Activated naive CD4-positive, alpha-beta T cell treated with anti-CD3 and anti-CD28 coated beads for 36 hours (primary cell): ENCODE measurements at regions of chr14 and their contacts with region 1.

Region 1: GRCh38 chr14:95227279-95227860 is 70.0 kb upstream of the DICER1 start:
- DNase-seq: no peak
- H3K4me3 Mint-ChIP-seq: no peak overlapping the region
- H3K27ac Mint-ChIP-seq: no peak overlapping the region
- H3K4me1 Mint-ChIP-seq: no peaks in the 10 kb centered on the region
- H3K27me3 Mint-ChIP-seq: peaks cover 4% of the 10 kb centered on the region

Region 2: DNA sequence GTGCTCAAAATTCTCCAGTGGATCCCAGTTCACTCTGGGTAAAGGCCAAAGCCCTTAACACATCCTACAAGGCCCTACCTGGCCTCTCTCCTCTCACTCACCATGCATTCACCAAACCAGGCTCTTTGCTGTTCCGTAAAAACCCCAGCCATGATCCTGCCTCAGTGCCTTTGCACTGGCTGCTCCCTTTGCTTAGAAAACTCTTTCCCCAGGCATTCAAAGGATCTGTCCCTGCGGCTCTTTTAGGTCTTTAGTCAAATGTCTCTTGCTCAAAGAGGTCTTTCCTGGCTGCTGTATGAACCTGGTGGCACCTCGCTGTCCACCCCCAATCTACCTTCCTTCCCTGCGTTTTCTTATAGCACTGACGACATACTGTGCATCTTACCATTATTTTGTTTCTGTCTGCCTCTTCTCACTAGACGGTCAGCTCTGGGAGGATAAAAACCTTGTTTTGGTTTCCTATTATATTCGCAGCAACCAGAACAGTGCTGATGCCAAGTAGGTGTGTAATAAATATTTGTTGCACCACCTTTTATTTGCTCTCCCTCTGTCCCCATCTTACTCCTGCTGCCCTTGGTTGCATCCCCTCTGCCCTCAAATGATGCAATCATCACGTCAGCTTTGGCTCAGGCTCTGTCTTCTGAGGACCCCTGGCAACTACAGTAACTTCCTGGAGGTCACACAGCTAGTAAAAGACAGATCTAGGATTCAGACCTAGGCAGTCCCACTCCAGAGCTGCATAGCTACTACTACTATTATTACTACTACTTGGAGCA is 46.2 kb before region 1 on chr14:
- CTCF ChIA-PET with region 1: interaction called, 10 read pairs
- intact Hi-C with region 1: no loop called
- DNase-seq: no peak
- H3K4me3 Mint-ChIP-seq: no peak overlapping the region
- H3K27ac Mint-ChIP-seq: no peak overlapping the region
- H3K4me1 Mint-ChIP-seq: peaks cover 1% of the 10 kb centered on the region
- H3K27me3 Mint-ChIP-seq: peaks cover 15% of the 10 kb centered on the region